ENCODE measurements at regions of chr14 and their contacts with region 1.

Region 1: DNA sequence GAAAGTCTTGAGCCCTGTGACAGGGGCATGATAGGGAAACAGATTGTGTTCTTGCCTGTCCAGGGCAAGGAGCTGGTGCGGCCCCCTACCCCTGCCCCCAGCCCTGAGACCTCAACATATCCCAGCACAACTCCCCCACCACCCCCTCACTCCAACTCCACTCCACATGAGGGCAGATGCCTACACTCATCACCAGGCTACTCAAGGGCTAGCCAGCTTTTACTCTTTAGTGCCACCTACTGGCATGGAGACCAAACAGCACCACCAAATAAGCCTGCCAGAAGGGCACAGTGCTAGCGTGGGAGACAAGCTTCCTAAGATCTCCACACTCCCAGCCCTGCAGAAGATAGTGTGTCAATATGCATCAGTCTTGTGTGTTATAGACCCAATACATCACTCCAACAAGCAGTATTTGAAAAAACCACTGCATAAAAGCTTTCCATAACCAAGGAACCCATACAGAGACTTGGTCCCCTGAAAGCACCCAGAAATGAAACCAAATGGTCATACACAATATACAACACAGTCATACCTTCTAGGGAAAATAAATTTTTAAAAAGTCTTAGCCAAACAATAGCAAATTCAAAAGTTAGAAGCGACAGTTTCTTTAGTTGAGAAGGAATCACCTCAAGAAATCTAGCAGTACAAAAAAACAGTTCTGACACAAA is 154.4 kb downstream of the KCNK10 start:
- DNase-seq: peak; percentile 33 to 73 (median 52)
- H3K4me3 ChIP-seq: no peak overlapping the region
- H3K27ac ChIP-seq: no peak overlapping the region
- H3K4me1 ChIP-seq: no peaks in the 10 kb centered on the region
- H3K27me3 ChIP-seq: peaks cover 4% of the 10 kb centered on the region
- CTCF ChIP-seq: peak; percentile 54 to 75 (median 70)
- POLR2A ChIP-seq: no peak

Region 2: DNA sequence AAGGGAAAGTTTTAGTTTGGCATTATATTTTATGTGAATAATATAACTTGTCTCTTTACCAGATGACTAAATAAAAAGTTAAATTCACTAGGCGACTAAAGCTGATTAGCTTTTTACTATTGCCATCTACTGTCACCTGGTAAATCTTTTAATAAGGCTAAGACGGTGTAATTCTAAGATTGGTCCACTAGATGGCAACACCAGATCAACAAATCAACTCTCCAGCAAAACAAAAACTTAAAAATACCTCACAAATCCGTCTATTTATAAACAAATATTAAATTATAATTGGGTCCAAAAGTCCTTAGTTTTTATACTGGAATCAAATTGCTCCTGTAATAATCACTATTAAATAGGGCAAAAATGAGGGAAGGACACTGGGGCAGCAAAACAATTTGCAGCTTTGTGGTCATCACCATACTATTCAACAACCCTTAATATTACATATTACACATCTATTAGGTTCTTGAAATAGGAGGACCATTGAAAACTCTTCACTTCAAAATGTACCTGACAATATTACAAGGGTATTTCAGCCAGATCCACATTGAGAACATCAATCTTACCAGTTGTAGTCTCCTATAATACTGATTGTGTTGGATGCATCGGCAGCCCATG is 223.5 kb before region 1 on chr14:
- intact Hi-C with region 1: loop called (anchors 5 to 10 kb)
- DNase-seq: no peak
- H3K4me3 ChIP-seq: no peak overlapping the region
- H3K27ac ChIP-seq: no peak overlapping the region
- H3K4me1 ChIP-seq: no peaks in the 10 kb centered on the region
- H3K27me3 ChIP-seq: no peaks in the 10 kb centered on the region
- CTCF ChIP-seq: peak; percentile 49 to 81 (median 66)
- POLR2A ChIP-seq: no peak

Region 3: DNA sequence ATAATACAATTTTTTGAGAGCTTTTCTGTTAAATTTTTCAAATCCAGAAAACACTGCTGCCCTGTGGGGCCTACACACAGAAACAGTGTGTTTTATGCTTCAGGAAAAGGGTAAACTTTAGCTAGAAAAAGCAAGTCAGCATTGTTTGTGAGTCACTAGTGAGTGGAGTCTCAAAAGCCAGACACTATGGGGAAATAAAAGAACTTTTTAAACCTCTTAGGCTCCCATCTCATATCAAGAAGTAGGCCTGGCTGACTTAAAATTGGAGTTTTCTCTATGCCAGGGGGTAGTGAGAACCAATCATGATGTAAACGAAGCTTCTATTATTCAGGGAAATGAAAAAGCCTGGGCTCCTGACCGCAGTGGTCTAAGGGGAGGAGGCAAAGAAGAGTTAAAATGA is 151.1 kb before region 1 on chr14:
- intact Hi-C with region 1: loop called in 1 of 2 experiments (anchors 5 kb)
- DNase-seq: no peak
- H3K4me3 ChIP-seq: no peak overlapping the region
- H3K27ac ChIP-seq: no peak overlapping the region
- H3K4me1 ChIP-seq: no peaks in the 10 kb centered on the region
- H3K27me3 ChIP-seq: no peaks in the 10 kb centered on the region
- CTCF ChIP-seq: no peak
- POLR2A ChIP-seq: no peak

Region 4: GRCh38 chr14:88299865-88300530 is 131.4 kb after region 1 on chr14:
- intact Hi-C with region 1: no loop called
- DNase-seq: peak in 2 of 7 donors; percentile 8 to 17
- H3K4me3 ChIP-seq: no peak overlapping the region
- H3K27ac ChIP-seq: no peak overlapping the region
- H3K4me1 ChIP-seq: no peaks in the 10 kb centered on the region
- H3K27me3 ChIP-seq: no peaks in the 10 kb centered on the region
- CTCF ChIP-seq: no peak
- POLR2A ChIP-seq: no peak

Region 5: DNA sequence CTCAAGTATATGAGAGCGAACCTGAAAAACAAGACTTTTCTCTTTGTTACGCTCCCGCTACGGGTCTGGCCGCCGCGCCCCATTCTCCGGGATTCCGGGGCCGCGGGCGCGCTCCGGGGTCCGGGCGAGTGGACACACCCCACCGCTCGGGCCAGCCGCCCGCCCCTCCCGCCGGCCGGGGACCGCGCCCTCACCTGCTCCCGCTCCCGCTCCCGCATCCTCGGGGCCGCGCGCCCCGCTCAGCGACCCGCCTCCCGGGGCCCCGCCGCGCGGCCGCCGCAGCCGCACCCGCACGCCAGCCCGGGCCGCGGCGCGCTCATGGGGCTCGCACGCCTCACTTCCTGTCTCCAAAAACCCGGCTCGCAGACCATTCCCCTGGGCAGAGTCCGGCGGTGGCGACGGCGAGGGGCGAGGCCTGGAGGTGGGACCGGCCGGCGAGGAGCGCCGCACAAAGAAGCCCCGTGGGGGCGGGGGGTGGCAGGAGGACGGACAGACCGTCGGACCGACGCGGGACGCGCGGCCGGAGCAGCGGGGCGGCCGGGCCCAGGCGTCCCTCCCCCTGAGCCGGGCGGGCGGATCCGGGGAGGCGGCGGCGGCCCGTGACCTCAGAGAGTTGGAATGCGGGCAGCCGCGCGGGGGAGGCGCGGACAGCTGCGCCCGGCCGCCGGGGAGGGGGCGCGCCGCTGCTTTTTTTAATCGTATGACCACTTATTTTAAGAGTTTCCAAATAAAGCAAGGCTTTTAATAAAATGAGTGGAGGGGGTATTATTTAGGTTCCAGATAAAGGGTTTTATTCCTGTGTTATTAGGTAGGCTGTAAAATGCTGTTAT is 386.0 kb after region 1 on chr14 and contains the start of gene PTPN21:
- intact Hi-C with region 1: no loop called
- DNase-seq: peak; percentile 68 to 81 (median 77)
- H3K4me3 ChIP-seq: peak within 1 kb of the TSS in 3 of 4 donors; percentile 55 to 95 (median 70)
- H3K27ac ChIP-seq: peak within 1 kb of the TSS in 4 of 5 donors; percentile 77 to 96 (median 79)
- H3K4me1 ChIP-seq: peaks cover 5 to 34% of the 10 kb centered on the region in 2 donors
- H3K27me3 ChIP-seq: no peaks in the 10 kb centered on the region
- CTCF ChIP-seq: no peak
- POLR2A ChIP-seq: peak in 1 of 2 donors; percentile 73
- total RNA-seq, gene PTPN21: 8.4 to 21.3 (median 13.5) TPM

Measured in adrenal gland (tissue), 19 donors.